MCF 10A (cell line): ENCODE measurements at regions of chr1 and their contacts with region 1.

Region 1: GRCh38 chr1:160837558-160838205 is 25.0 kb downstream of the CD244 start:
- DNase-seq: no peak
- H3K4me3 Mint-ChIP-seq: no peak overlapping the region
- H3K27ac Mint-ChIP-seq: no peak overlapping the region
- H3K4me1 Mint-ChIP-seq: no peaks in the 10 kb centered on the region
- H3K27me3 Mint-ChIP-seq: no peaks in the 10 kb centered on the region
- CTCF ChIP-seq: no peak

Region 2: DNA sequence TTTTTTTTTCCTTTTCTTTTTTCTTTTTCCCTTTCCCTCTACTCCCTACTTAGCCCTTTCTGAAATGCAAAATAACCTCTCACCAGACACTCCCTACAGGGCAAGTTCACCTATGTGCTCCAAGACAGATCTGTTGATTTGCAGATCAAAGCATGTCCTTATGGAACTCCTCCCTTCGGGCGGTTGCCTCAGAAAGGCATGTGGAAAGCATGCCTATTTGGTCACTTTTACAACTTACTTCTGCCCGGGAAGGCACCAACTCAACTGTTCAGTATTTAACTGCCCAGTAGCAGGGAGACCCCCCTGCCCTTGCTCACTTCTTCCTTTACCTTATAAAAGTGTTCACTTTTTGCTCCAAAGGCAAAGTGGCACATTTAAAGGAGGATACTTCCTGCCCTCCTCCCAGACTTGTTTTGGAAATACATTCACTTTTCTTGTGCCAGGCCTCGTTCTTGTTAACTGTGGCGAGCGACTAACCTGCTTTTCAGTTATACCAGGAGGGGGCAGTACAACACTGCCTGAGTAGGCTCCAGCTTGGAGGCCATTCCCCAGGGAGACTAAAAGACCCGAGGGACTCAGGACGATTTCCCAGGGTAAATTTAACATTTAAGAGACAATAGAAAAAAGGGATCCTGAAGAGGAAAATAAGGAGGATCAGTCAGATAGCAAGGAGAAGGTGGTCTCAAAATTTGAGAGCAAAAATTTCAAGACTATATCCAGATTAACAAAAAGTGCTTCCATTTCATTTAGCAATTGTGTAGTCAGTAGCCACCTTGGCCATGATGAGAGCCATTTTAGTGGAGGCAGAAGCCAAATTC is 111.0 kb before region 1 on chr1:
- CTCF ChIA-PET with region 1: interaction called, 41 read pairs
- POLR2A ChIA-PET with region 1: interaction called, 4 read pairs
- intact Hi-C with region 1: no loop called
- DNase-seq: peak; percentile 90
- H3K4me3 Mint-ChIP-seq: no peak overlapping the region
- H3K27ac Mint-ChIP-seq: no peak overlapping the region
- H3K4me1 Mint-ChIP-seq: no peaks in the 10 kb centered on the region
- H3K27me3 Mint-ChIP-seq: no peaks in the 10 kb centered on the region
- CTCF ChIP-seq: peak; percentile 91

Region 3: DNA sequence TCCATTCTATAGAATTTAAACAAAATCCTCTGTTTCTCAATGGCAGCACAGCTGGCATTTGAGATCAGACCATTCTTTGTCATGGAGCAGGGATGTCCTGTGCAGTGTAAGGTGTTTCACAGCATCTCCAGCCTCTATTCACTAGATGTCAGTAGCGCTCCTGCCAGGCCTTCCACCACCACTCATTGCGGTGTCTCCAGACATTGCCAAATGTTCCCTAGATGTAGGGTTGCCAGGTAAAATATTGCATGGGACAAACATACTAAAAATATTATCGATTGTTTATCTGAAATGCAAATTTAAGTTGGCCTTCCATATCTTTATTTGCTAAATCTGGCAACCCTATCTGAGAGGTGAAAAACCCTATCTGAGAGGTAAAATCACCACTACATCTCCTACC is 105.2 kb after region 1 on chr1:
- CTCF ChIA-PET with region 1: interaction called, 17 read pairs
- POLR2A ChIA-PET with region 1: no interaction called
- intact Hi-C with region 1: no loop called
- DNase-seq: peak; percentile 54
- H3K4me3 Mint-ChIP-seq: no peak overlapping the region
- H3K27ac Mint-ChIP-seq: no peak overlapping the region
- H3K4me1 Mint-ChIP-seq: peaks cover 11% of the 10 kb centered on the region
- H3K27me3 Mint-ChIP-seq: peaks cover 30% of the 10 kb centered on the region
- CTCF ChIP-seq: peak; percentile 48

Region 4: DNA sequence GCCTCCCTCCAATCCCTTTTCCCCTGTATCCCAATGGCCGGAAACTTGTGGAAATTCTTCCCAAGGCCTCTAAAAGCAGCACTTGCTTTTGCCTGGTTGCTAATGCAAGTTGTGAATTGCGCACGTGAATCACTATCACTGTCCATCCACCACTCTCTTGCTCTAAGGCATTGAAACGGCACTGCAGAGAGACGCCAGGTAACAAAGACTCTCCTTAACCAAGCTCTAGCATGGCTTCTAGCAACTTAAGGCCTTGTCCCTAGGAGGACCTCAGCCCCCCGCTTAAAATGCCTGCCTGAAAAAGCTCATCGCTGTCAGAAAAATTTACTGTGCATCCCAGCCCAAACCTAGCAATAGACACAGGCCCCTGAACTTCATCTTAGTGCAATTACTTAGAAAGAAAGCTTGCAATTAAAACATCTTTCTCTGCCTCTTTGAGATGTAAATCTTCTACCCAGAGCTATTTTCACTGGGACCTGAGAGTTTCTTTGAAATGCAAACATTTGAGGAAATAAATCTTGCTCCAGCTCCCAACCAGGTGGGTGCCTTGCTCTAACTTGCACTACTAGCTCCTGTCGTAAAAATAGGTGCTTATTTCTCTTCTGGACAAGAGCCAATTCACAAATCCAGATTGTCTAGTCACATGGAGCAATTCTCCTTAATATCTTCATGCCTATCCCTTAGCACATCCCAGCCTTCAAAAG is 149.8 kb after region 1 on chr1:
- CTCF ChIA-PET with region 1: interaction called, 109 read pairs
- POLR2A ChIA-PET with region 1: no interaction called
- intact Hi-C with region 1: loop called (anchors 1 kb)
- DNase-seq: no peak
- H3K4me3 Mint-ChIP-seq: no peak overlapping the region
- H3K27ac Mint-ChIP-seq: no peak overlapping the region
- H3K4me1 Mint-ChIP-seq: no peaks in the 10 kb centered on the region
- H3K27me3 Mint-ChIP-seq: no peaks in the 10 kb centered on the region
- CTCF ChIP-seq: no peak

Region 5: GRCh38 chr1:161139765-161140164 is 302.1 kb after region 1 on chr1:
- CTCF ChIA-PET with region 1: interaction called, 15 read pairs
- POLR2A ChIA-PET with region 1: no interaction called
- intact Hi-C with region 1: no loop called
- DNase-seq: peak; percentile 77
- H3K4me3 Mint-ChIP-seq: no peak overlapping the region
- H3K27ac Mint-ChIP-seq: no peak overlapping the region
- H3K4me1 Mint-ChIP-seq: peaks cover 4% of the 10 kb centered on the region
- H3K27me3 Mint-ChIP-seq: no peaks in the 10 kb centered on the region
- CTCF ChIP-seq: peak; percentile 64

Region 6: GRCh38 chr1:161209790-161210409 is 372.2 kb after region 1 on chr1:
- CTCF ChIA-PET with region 1: no interaction called
- POLR2A ChIA-PET with region 1: no interaction called
- intact Hi-C with region 1: no loop called
- DNase-seq: peak; percentile 91
- H3K4me3 Mint-ChIP-seq: no peak overlapping the region
- H3K27ac Mint-ChIP-seq: no peak overlapping the region
- H3K4me1 Mint-ChIP-seq: peaks cover 25% of the 10 kb centered on the region
- H3K27me3 Mint-ChIP-seq: no peaks in the 10 kb centered on the region
- CTCF ChIP-seq: peak; percentile 95